Heart right ventricle (tissue), 16 donors: ENCODE measurements at regions of chr7 and their contacts with region 1.

Region 1: GRCh38 chr7:82044497-82045080 is 274.7 kb upstream of the HGF start:
- DNase-seq: peak in 1 of 2 donors; percentile 42
- ATAC-seq: peak in 5 of 8 donors; percentile 42 to 65 (median 55)
- H3K4me3 ChIP-seq: no peak overlapping the region
- H3K27ac ChIP-seq: no peak overlapping the region
- H3K4me1 ChIP-seq: peaks cover 0 to 15% (median 5%) of the 10 kb centered on the region in 9 donors
- H3K27me3 ChIP-seq: no peaks in the 10 kb centered on the region
- CTCF ChIP-seq: peak; percentile 35 to 83 (median 75)

Region 2: DNA sequence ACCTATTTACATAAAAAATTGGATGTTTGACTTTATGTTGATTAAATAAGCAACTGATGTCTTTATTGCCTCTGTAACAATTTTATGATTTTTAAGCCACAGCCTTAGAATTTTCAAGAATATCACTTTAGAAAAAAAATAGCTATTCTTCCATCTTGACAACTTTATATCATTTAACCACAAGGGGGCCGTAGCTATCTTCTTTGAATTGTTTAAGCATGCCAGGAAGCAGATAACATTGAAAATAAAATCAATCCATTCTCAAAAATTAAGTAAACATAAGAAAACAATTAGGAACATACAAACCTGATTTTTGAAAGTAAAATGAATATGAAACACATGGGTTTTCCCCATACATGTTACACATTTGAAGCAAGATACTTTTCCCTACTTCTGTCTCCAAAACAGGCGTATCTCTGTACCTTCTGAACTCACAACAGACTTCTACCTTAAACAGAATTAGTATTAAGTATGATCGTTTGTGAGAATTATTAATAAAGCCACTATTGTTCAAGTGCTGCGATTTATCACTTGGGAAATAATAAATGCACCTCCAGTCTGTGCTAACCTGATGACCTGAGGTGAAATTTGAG is 190.0 kb after region 1 on chr7:
- intact Hi-C with region 1: loop called in 1 of 10 experiments (anchors 10 kb)
- DNase-seq: no peak
- ATAC-seq: peak in 2 of 8 donors; percentile 24 to 38
- H3K4me3 ChIP-seq: no peak overlapping the region
- H3K27ac ChIP-seq: peak overlapping the region in 1 of 10 donors; percentile 28
- H3K4me1 ChIP-seq: peaks cover 0 to 30% (median 11%) of the 10 kb centered on the region in 9 donors
- H3K27me3 ChIP-seq: no peaks in the 10 kb centered on the region
- CTCF ChIP-seq: peak; percentile 46 to 74 (median 55)

Region 3: DNA sequence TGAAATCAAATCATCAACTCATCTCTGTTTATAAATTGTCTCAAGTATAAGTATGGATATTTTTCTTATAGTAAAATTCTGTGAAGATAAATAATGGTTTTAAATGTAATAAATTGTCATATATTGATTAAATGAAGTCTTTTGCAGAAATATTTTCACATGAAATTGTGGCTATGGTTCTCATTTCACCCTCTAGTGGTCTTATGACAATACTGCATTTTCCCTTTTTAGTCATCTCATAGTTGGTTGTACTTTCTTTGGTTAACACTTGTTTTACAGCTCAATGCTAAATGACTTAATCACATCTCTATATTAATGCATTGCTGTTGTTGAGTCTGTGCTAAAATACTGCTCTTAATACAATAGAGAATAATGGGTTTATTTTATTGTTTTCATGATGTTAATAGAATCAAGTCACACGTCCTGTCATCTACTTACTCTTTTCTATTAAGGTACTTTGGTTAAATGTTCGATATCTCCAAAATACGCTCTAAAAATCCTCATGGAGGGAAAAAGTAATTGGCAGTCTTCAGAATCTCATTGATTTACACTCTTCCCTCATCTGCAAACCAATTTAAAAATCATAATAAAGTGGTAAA is 437.0 kb after region 1 on chr7:
- intact Hi-C with region 1: loop called in 3 of 10 experiments (anchors 10 kb)
- DNase-seq: no peak
- ATAC-seq: no peak
- H3K4me3 ChIP-seq: no peak overlapping the region
- H3K27ac ChIP-seq: no peak overlapping the region
- H3K4me1 ChIP-seq: peaks cover 0 to 6% (median 0%) of the 10 kb centered on the region in 9 donors
- H3K27me3 ChIP-seq: no peaks in the 10 kb centered on the region
- CTCF ChIP-seq: peak; percentile 38 to 82 (median 74)

Region 4: GRCh38 chr7:82578430-82578829 is 533.8 kb after region 1 on chr7:
- intact Hi-C with region 1: loop called in 8 of 10 experiments (anchors 2 to 5 kb)
- DNase-seq: peak in 1 of 2 donors; percentile 6
- ATAC-seq: no peak
- H3K4me3 ChIP-seq: no peak overlapping the region
- H3K27ac ChIP-seq: no peak overlapping the region
- H3K4me1 ChIP-seq: peaks cover 0 to 9% (median 0%) of the 10 kb centered on the region in 9 donors
- H3K27me3 ChIP-seq: no peaks in the 10 kb centered on the region
- CTCF ChIP-seq: no peak

Region 5: DNA sequence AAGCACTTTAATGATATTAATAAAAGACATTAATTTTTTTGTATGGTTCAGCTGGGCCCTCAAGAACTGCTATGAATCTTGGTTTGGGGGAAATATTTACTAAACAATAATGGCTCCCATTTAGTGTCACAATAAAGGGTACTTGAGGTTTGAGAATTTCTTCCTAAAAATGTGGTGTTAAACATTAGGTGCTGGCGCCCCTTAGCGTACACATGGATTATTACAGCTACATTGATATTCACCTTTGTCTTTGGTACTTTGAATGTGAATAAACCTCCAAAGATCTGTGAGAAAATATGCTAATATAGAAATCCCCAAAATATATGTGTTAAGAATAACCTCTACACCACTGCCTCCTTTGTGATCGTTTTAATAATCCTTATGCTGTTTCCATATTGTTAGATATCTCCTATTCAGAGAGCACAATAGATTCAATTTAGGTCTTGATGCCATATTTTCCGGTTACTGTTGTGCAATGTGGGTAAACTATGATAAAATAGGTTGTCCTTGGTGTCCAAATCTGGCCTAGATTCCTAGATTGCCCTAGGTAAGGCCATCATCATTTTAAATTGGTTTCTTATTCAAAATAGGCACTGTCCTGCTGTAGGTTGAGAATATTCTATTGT is 560.8 kb after region 1 on chr7:
- intact Hi-C with region 1: loop called in 6 of 10 experiments (anchors 2 to 10 kb)
- DNase-seq: peak in 1 of 2 donors; percentile 8
- ATAC-seq: no peak
- H3K4me3 ChIP-seq: no peak overlapping the region
- H3K27ac ChIP-seq: no peak overlapping the region
- H3K4me1 ChIP-seq: no peaks in the 10 kb centered on the region
- H3K27me3 ChIP-seq: no peaks in the 10 kb centered on the region
- CTCF ChIP-seq: peak; percentile 55 to 82 (median 70)